Right ventricle myocardium inferior (tissue), 1 donor: ENCODE measurements at regions of chr17 and their contacts with region 1.

Region 1: GRCh38 chr17:3935140-3935542 is 18.9 kb upstream of the P2RX1 start:
- DNase-seq: peak; percentile 71
- ATAC-seq: peak; percentile 88

Region 2: GRCh38 chr17:3893003-3893719 is 42.0 kb before region 1 on chr17 and contains the start of gene CAMKK1:
- intact Hi-C with region 1: no loop called
- DNase-seq: peak; percentile 96
- ATAC-seq: peak; percentile 90
- total RNA-seq, gene CAMKK1: 3.8 TPM

Region 3: GRCh38 chr17:4004517-4005295 is 69.6 kb after region 1 on chr17:
- intact Hi-C with region 1: loop called (anchors 1 kb)
- DNase-seq: peak; percentile 83
- ATAC-seq: peak; percentile 55